MCF 10A (cell line): ENCODE measurements at regions of chr1 and their contacts with region 1.

Region 1: DNA sequence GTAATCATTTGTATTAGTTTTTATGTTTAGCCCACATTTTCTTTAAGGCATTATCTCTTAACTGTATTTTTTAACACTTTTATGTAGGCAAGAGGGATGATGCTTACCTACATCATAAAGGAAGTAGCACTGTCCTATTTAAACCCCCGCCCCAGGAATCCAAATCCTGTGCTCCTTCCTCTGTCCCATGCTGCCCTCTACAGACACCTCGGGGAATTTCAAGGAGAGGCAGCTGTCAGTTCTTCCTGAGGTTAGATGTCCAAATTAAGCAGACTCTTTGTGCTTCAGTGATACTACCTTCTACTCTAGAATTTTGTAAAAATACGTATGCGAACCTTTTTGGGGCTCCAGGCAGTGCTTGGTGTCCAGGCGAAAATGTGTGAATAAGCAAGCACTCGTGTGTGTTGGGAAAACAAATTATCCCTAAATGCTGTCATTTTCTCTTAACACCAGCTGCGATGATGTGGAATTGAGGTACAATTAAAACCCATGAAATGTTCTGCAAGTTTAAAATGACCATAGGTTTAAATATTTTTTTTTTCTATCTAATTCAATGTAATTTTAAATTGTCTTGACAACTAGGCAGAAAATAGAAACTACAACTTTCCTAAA is 19.2 kb downstream of the CRCT1 start:
- DNase-seq: peak; percentile 88
- H3K4me3 Mint-ChIP-seq: no peak overlapping the region
- H3K27ac Mint-ChIP-seq: no peak overlapping the region
- H3K4me1 Mint-ChIP-seq: peaks cover 5% of the 10 kb centered on the region
- H3K27me3 Mint-ChIP-seq: no peaks in the 10 kb centered on the region
- CTCF ChIP-seq: peak; percentile 99

Region 2: GRCh38 chr1:152398812-152399698 is 134.4 kb before region 1 on chr1:
- CTCF ChIA-PET with region 1: interaction called, 5 read pairs
- POLR2A ChIA-PET with region 1: no interaction called
- intact Hi-C with region 1: loop called (anchors 2 kb)
- DNase-seq: peak; percentile 73
- H3K4me3 Mint-ChIP-seq: no peak overlapping the region
- H3K27ac Mint-ChIP-seq: no peak overlapping the region
- H3K4me1 Mint-ChIP-seq: peaks cover 6% of the 10 kb centered on the region
- H3K27me3 Mint-ChIP-seq: peaks cover 86% of the 10 kb centered on the region
- CTCF ChIP-seq: peak; percentile 74

Region 3: GRCh38 chr1:152473887-152474537 is 59.4 kb before region 1 on chr1:
- CTCF ChIA-PET with region 1: interaction called, 11 read pairs
- POLR2A ChIA-PET with region 1: interaction called, 4 read pairs
- intact Hi-C with region 1: no loop called
- DNase-seq: peak; percentile 36
- H3K4me3 Mint-ChIP-seq: no peak overlapping the region
- H3K27ac Mint-ChIP-seq: peak overlapping the region; percentile 28
- H3K4me1 Mint-ChIP-seq: peaks cover 15% of the 10 kb centered on the region
- H3K27me3 Mint-ChIP-seq: no peaks in the 10 kb centered on the region
- CTCF ChIP-seq: no peak

Region 4: DNA sequence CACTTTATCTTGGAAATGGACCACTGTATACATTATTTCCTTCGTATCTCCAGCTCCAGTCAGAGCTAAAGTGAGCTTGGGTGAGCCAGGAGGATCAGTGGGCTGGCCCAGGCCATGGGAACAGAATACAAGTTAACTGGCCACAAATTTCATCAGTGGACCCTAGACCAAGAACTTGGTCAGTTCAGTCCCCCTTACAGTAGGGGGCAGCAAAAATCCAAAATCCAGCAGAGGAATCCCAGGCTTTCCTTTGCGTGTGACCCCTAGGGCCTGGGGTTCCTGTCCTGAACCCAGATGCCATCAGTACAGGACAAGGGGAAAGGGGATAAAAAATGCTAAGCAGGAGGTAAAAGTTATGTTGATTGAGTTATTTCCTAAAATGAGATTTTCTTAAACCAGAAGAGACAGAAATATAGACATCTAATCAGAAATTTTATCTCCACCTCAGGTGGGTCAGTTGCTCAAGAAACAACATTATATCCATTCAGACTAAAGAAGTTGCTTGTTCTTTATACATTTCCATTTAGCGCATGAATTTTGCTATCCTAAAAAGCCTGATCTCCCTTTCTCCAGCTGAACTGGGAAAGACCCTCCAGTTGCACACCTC is 46.9 kb before region 1 on chr1:
- CTCF ChIA-PET with region 1: interaction called, 25 read pairs
- POLR2A ChIA-PET with region 1: interaction called, 3 read pairs
- intact Hi-C with region 1: loop called (anchors 2 kb)
- DNase-seq: peak; percentile 51
- H3K4me3 Mint-ChIP-seq: no peak overlapping the region
- H3K27ac Mint-ChIP-seq: peak overlapping the region; percentile 85
- H3K4me1 Mint-ChIP-seq: peaks cover 20% of the 10 kb centered on the region
- H3K27me3 Mint-ChIP-seq: no peaks in the 10 kb centered on the region
- CTCF ChIP-seq: peak; percentile 75

Region 5: DNA sequence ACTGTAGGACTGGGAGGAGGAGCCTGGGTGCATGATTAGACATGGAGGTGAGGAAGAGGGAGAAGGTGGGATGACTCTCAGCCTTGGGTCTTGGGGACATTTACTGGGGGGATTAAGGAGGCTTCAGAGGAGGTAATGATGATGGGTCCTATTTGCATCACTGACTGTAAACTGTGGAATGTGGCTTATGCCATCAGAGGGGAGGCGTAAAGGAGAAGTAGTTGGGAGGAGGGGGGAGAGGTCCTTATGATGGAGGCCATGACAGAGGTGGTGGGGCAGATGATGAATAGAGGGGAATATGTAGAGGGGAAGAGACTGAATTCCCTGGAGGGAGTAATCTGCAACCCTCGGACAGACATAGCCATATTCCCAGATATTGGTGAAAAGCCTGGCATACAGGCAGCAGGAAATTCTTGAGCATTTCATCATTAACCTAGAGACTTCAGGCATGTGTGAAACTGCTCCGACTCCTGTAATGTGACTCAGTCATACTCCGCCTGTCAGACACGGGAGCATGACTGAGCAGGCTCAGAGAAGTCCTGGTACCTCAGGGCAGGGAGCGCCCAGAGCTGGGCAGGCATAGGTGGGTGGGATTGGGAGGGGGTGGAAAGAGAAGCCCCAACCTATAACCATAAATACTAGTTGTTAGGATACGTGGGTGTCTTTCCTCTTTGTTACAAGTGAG is 30.8 kb before region 1 on chr1:
- CTCF ChIA-PET with region 1: interaction called, 75 read pairs
- POLR2A ChIA-PET with region 1: interaction called, 5 read pairs
- intact Hi-C with region 1: loop called (anchors 1 kb)
- DNase-seq: peak; percentile 93
- H3K4me3 Mint-ChIP-seq: no peak overlapping the region
- H3K27ac Mint-ChIP-seq: peak overlapping the region; percentile 60
- H3K4me1 Mint-ChIP-seq: peaks cover 36% of the 10 kb centered on the region
- H3K27me3 Mint-ChIP-seq: no peaks in the 10 kb centered on the region
- CTCF ChIP-seq: no peak

Region 6: DNA sequence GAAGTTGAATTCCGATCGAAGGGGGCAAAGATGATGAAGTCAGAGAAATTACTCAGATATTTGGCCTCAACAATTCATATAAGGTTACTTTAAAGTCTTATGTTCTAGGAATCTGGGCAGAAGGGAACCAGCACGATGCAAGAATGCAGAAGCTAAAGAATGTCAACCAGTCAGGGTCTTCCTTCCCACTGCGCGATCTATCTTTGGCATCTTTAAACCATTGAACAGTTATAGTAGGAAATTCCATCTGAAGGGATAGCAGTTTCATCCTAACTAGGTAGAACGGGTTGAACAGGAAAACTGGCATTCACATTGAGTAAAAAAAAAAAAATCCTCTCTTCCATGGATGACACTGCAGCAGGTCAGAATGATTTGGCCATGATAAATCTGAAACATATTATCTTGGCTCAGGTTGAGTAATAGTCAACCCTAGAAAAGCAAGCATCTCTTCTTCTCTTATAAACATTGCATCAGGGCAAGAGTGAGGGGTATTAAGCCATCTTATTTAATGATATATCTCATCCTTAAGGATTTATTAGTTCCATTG is 12.8 kb before region 1 on chr1:
- CTCF ChIA-PET with region 1: interaction called, 18 read pairs
- POLR2A ChIA-PET with region 1: interaction called, 4 read pairs
- intact Hi-C with region 1: no loop called
- DNase-seq: no peak
- H3K4me3 Mint-ChIP-seq: no peak overlapping the region
- H3K27ac Mint-ChIP-seq: no peak overlapping the region
- H3K4me1 Mint-ChIP-seq: peaks cover 15% of the 10 kb centered on the region
- H3K27me3 Mint-ChIP-seq: no peaks in the 10 kb centered on the region
- CTCF ChIP-seq: no peak